Right cardiac atrium (tissue), 5 donors: ENCODE measurements at regions of chr1 and their contacts with region 1.

Region 1: GRCh38 chr1:157992031-157992832 is 1.2 kb upstream of the KIRREL1 start:
- DNase-seq: peak; percentile 74 to 89 (median 83)
- ATAC-seq: peak; percentile 64 to 67
- H3K4me3 ChIP-seq: no peak overlapping the region
- H3K27ac ChIP-seq: peak overlapping the region; percentile 74
- H3K4me1 ChIP-seq: peaks cover 8% of the 10 kb centered on the region
- H3K27me3 ChIP-seq: no peaks in the 10 kb centered on the region

Region 2: DNA sequence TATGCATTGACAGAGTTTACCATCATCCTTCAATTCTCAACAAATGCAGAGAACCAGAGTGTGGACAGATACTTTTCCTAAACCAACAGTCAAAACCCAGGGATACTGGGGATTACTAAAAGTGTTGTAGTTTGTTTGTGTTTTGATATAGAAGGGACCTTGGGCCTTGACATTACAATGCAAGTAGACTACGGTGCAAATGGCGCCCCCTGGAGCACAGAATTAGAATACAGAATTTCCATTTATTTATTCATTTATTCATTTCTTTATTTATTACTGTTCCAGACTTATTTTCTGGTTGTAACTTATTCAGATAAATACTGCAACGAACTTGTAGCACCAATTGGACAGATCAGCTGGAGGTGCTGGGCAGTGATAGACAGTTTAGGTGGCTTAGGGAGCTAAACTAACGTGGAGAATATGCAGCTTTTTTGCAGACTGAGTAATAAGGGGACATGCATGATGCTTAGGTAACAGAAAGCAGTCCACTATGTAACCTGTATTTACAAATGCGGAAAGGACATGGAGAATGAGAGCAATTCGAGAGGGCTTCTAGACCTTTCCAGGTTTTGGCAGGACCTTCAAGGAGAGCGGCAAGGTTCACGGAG is 43.8 kb after region 1 on chr1:
- intact Hi-C with region 1: loop called (anchors 2 to 5 kb)
- DNase-seq: peak in 2 of 3 donors; percentile 31 to 60
- ATAC-seq: peak in 1 of 2 donors; percentile 42
- H3K4me3 ChIP-seq: no peak overlapping the region
- H3K27ac ChIP-seq: no peak overlapping the region
- H3K4me1 ChIP-seq: peaks cover 4% of the 10 kb centered on the region
- H3K27me3 ChIP-seq: no peaks in the 10 kb centered on the region

Region 3: GRCh38 chr1:158087320-158087927 is 95.2 kb after region 1 on chr1:
- intact Hi-C with region 1: loop called (anchors 5 to 10 kb)
- DNase-seq: peak in 2 of 3 donors; percentile 63 to 79
- ATAC-seq: peak; percentile 26 to 81
- H3K4me3 ChIP-seq: no peak overlapping the region
- H3K27ac ChIP-seq: no peak overlapping the region
- H3K4me1 ChIP-seq: no peaks in the 10 kb centered on the region
- H3K27me3 ChIP-seq: no peaks in the 10 kb centered on the region

Region 4: GRCh38 chr1:158117854-158118704 is 125.8 kb after region 1 on chr1:
- intact Hi-C with region 1: loop called (anchors 5 to 10 kb)
- DNase-seq: peak in 2 of 3 donors; percentile 53 to 64
- ATAC-seq: peak; percentile 66 to 70
- H3K4me3 ChIP-seq: peak overlapping the region; percentile 49
- H3K27ac ChIP-seq: no peak overlapping the region
- H3K4me1 ChIP-seq: no peaks in the 10 kb centered on the region
- H3K27me3 ChIP-seq: no peaks in the 10 kb centered on the region

Region 5: GRCh38 chr1:158124999-158125398 is 132.8 kb after region 1 on chr1:
- intact Hi-C with region 1: loop called in 2 of 4 experiments (anchors 5 kb)
- DNase-seq: peak; percentile 82 to 95 (median 88)
- ATAC-seq: peak; percentile 98
- H3K4me3 ChIP-seq: no peak overlapping the region
- H3K27ac ChIP-seq: no peak overlapping the region
- H3K4me1 ChIP-seq: no peaks in the 10 kb centered on the region
- H3K27me3 ChIP-seq: no peaks in the 10 kb centered on the region